Sigmoid colon (tissue), 7 donors: ENCODE measurements at regions of chr7 and their contacts with region 1.

Region 1: DNA sequence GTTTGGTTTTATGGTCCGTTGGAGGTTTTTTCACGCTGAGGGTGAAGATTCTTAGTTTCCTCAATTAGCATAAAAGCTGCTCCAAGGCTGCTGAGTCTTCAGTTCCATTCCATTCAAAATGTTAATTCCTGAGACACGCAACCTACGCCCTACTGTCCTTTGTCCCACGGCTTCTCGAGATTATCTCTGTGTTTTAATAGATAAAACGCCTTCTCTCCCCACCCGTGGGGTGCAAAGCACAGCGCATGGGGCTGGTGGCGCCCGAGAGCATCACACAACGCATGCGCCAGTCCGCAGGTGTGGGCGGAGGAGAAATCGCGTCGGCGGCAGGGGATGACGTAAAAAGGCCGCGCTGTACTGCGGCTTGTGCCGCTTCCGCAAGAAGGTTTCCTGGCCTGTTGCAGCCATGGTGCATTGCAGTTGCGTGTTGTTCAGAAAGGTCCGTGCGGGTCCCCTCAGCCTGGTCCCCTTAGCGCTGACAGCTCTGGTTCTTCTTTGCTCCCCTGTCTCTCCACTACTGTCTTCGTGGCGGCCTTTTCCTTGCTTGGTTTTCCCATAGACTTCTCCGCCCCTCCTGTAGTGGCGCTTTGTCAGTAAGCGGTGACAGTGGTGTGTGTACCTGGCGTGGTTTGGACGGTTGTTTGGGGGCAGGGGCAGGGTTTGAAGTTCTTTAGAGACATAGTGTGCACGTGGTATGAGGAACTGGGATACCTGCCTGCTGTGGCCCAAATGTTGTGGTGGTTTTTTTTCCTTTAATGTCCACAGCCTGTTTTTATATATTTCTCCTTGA is at the start of gene GTPBP10:
- DNase-seq: peak; percentile 96
- H3K4me3 ChIP-seq: peak within 1 kb of the TSS; percentile 64 to 86 (median 68)
- H3K27ac ChIP-seq: peak within 1 kb of the TSS; percentile 80 to 87 (median 84)
- H3K4me1 ChIP-seq: peaks cover 0 to 17% (median 11%) of the 10 kb centered on the region in 4 donors
- H3K27me3 ChIP-seq: no peaks in the 10 kb centered on the region
- CTCF ChIP-seq: peak; percentile 39 to 81 (median 64)
- EP300 ChIP-seq: peak in 1 of 4 donors; percentile 32
- POLR2A ChIP-seq: peak; percentile 34 to 54
- total RNA-seq, gene GTPBP10: 9.7 to 16.8 (median 13.3) TPM

Region 2: DNA sequence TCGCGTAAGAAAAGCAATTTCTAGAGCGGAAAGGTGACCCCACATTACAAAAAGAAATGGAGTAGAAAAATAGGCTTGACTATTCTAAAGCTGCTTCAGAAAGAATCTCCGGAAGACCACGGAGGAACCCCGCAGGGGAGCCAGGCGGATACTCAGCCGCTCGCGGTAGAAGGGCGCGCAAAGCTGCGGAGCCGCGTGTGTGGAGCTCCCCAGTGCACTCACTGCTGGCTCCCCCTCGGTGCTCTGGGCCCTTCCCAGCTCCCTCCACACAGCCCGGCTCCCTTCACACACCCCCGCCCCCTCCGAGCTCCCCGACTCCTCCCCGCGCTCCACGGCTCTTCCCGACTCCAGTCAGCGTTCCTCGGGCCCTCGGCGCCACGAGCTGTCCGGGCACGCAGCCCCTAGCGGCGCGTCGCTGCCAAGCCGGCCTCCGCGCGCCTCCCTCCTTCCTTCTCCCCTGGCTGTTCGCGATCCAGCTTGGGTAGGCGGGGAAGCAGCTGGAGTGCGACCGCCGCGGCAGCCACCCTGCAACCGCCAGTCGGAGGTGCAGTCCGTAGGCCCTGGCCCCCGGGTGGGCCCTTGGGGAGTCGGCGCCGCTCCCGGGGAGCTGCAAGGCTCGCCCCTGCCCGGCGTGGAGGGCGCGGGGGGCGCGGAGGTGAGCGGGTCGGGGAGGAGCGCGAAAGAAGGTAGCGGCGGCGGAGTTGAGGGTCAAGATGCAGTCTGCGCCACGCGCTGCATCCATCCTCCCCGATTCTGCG is 135.0 kb before region 1 on chr7 and contains the start of gene STEAP2:
- intact Hi-C with region 1: loop called (anchors 5 kb)
- DNase-seq: peak; percentile 98
- H3K4me3 ChIP-seq: peak within 1 kb of the TSS; percentile 70 to 76 (median 73)
- H3K27ac ChIP-seq: peak within 1 kb of the TSS; percentile 80 to 89 (median 88)
- H3K4me1 ChIP-seq: peaks cover 0 to 16% (median 7%) of the 10 kb centered on the region in 4 donors
- H3K27me3 ChIP-seq: no peaks in the 10 kb centered on the region
- CTCF ChIP-seq: peak; percentile 67 to 77 (median 72)
- EP300 ChIP-seq: no peak
- POLR2A ChIP-seq: peak; percentile 15 to 69
- total RNA-seq, gene STEAP2: 22.5 to 32.1 (median 27.6) TPM

Region 3: GRCh38 chr7:90403174-90404113 is 56.9 kb after region 1 on chr7 and contains the start of gene CLDN12:
- intact Hi-C with region 1: loop called (anchors 2 kb)
- DNase-seq: peak; percentile 95
- H3K4me3 ChIP-seq: peak within 1 kb of the TSS; percentile 63 to 70 (median 66)
- H3K27ac ChIP-seq: peak within 1 kb of the TSS; percentile 92 to 95 (median 94)
- H3K4me1 ChIP-seq: peaks cover 0 to 15% (median 6%) of the 10 kb centered on the region in 4 donors
- H3K27me3 ChIP-seq: no peaks in the 10 kb centered on the region
- CTCF ChIP-seq: no peak
- EP300 ChIP-seq: peak in 3 of 4 donors; percentile 10 to 69 (median 49)
- POLR2A ChIP-seq: peak in 1 of 2 donors; percentile 47
- total RNA-seq, gene CLDN12: 17.2 to 33.9 (median 26.1) TPM